Activated CD4-positive, alpha-beta memory T cell treated with anti-CD3 and anti-CD28 coated beads for 36 hours (primary cell): ENCODE measurements at regions of chr15 and their contacts with region 1.

Region 1: GRCh38 chr15:48925714-48926223 is 38.0 kb downstream of the SHC4 start:
- DNase-seq: peak; percentile 28
- H3K4me3 Mint-ChIP-seq: no peak overlapping the region
- H3K27ac Mint-ChIP-seq: peak overlapping the region; percentile 54
- H3K4me1 Mint-ChIP-seq: peaks cover 42% of the 10 kb centered on the region
- H3K27me3 Mint-ChIP-seq: peaks cover 12% of the 10 kb centered on the region

Region 2: GRCh38 chr15:48888836-48889235 is 36.9 kb before region 1 on chr15:
- CTCF ChIA-PET with region 1: no interaction called
- POLR2A ChIA-PET with region 1: no interaction called
- intact Hi-C with region 1: loop called (anchors 1 kb)
- DNase-seq: no peak
- H3K4me3 Mint-ChIP-seq: no peak overlapping the region
- H3K27ac Mint-ChIP-seq: no peak overlapping the region
- H3K4me1 Mint-ChIP-seq: peaks cover 12% of the 10 kb centered on the region
- H3K27me3 Mint-ChIP-seq: peaks cover 19% of the 10 kb centered on the region

Region 3: DNA sequence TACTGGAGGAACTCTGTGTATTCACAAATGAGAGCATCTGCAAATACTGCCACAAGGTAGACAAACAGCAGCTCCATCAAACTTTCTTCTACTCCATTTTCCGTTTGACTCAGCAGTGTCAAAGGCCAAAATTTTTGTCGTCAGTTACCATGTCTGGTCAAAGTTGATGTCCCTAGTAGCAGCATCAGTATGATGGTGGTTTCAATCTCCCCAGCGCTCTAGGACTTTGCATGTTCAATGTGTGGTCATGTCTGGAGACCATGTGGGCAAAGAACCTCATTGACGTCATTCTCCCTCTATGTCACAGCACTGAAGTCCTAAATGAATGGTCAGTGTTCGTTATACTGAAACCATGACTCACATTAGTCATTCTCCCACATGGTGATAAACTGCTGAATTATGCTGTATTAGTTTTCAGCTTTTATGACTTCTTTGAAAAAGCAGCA is 14.7 kb after region 1 on chr15:
- CTCF ChIA-PET with region 1: interaction called, 3 read pairs
- POLR2A ChIA-PET with region 1: no interaction called
- intact Hi-C with region 1: loop called (anchors 1 kb)
- DNase-seq: peak; percentile 45
- H3K4me3 Mint-ChIP-seq: no peak overlapping the region
- H3K27ac Mint-ChIP-seq: peak overlapping the region; percentile 42
- H3K4me1 Mint-ChIP-seq: peaks cover 14% of the 10 kb centered on the region
- H3K27me3 Mint-ChIP-seq: peaks cover 22% of the 10 kb centered on the region

Region 4: GRCh38 chr15:48946088-48946839 is 20.5 kb after region 1 on chr15:
- CTCF ChIA-PET with region 1: no interaction called
- POLR2A ChIA-PET with region 1: no interaction called
- intact Hi-C with region 1: loop called (anchors 1 kb)
- DNase-seq: no peak
- H3K4me3 Mint-ChIP-seq: no peak overlapping the region
- H3K27ac Mint-ChIP-seq: peak overlapping the region; percentile 11
- H3K4me1 Mint-ChIP-seq: peaks cover 14% of the 10 kb centered on the region
- H3K27me3 Mint-ChIP-seq: peaks cover 11% of the 10 kb centered on the region